HCT116 (cell line): ENCODE measurements at regions of chr22 and their contacts with region 1.

Region 1: GRCh38 chr22:41822317-41823060 is 10.4 kb upstream of the SREBF2 start:
- DNase-seq: peak; percentile 62
- ATAC-seq: peak; percentile 85
- H3K4me3 ChIP-seq: no peak overlapping the region
- H3K27ac ChIP-seq: no peak overlapping the region
- H3K4me1 ChIP-seq: peaks cover 5 to 10% of the 10 kb centered on the region in 2 experiments; a peak in 3 of 4 replicates
- H3K27me3 ChIP-seq: no peaks in the 10 kb centered on the region
- CTCF ChIP-seq: peak; percentile 46 to 68 (median 65); a peak in 5 of 6 replicates
- POLR2A ChIP-seq: no peak
- RAD21 ChIP-seq: peak; percentile 77

Region 2: DNA sequence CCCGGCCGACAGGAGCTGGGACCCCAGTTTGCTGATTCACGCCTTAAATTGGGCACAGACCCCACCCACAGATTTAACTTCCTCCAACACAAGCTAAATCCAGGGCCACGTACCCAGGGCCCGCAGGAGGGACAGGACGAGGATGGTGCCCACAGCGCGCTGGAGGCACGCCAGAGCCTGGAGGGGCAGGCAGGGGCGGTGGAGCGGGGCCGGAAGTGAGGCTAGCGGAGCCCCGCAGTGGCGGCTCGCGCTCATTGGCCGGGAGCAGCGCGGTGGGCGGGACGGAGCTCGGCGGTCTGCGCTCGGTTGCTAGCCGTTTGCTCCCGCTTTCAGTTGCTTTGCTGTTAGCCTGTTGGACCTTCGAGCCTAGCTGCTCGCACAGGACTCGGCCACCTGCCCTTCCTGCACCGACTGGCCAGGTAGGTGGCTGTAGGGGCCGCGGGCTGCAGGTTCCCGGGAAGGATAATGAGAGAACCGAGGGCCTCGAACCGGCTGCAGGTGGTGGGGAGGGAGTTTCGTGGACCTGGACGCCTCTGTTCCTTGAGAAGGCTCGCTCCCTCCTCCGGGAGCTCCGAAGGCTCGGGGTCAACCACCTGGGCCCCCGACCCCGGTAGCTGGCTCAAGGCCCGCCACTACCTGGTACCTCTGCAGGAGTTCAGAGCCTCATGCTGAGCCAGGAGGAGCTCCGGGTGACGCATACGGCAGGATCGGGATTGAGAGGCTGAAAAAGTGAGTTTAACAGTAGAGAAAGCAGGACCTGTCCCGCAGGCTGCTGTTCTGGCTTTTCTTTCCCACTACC is 21.9 kb before region 1 on chr22 and contains the start of gene CCDC134:
- CTCF ChIA-PET with region 1: no interaction called
- POLR2A ChIA-PET with region 1: no interaction called
- RAD21 ChIA-PET with region 1: no interaction called
- intact Hi-C with region 1: no loop called
- DNase-seq: peak; percentile 41
- ATAC-seq: peak; percentile 99
- H3K4me3 ChIP-seq: peak within 1 kb of the TSS; percentile 66 to 93
- H3K27ac ChIP-seq: peak within 1 kb of the TSS; percentile 82
- H3K4me1 ChIP-seq: peaks cover 11 to 20% of the 10 kb centered on the region in 2 experiments
- H3K27me3 ChIP-seq: no peaks in the 10 kb centered on the region
- CTCF ChIP-seq: no peak
- POLR2A ChIP-seq: peak; percentile 93
- RAD21 ChIP-seq: no peak
- total RNA-seq, gene CCDC134: 15.8 TPM

Region 3: DNA sequence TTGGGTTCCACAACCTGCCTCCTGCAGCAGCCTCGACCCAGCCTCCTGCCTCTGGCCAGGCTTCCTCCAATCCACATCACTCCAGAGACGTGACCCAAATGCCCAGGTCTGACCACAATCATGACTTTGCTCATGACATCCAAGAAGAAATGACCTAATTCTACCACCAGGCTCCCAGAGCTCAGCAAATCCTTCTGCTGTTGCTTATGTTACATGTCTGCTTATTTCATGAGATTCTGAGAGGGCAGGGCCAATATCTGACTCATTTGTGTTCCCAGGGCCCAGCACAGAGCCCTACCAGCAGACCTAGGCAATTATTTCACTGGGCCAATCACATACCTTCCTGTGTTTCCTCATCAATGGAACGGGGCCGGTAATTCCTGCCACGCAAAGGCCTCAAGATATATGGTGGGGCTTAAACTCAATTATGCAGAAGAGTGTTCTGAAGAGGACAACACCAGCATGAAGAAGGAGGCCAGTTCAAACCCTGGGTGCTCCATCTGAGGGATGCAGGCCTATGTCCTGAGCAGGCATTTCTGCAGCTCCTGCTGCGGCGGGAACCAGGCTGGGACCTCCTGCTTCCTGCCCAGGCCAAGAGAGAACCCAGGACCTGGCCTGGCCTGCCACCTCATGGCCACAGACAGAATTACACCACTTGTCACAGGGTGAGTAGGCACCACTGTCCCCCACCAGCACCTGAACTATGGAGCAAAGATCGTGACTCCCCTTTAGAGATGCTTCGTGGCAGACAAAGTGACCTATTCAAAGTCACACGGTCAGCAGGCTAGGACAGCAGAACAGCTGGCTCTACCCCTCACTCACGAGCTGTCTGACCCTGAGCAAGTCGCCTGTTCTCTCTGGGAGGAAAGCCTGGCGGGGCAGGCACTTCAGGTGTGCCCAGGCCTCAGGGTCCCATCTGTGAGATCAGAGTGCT is 118.6 kb after region 1 on chr22:
- CTCF ChIA-PET with region 1: no interaction called
- POLR2A ChIA-PET with region 1: no interaction called
- RAD21 ChIA-PET with region 1: no interaction called
- intact Hi-C with region 1: loop called (anchors 1 kb)
- DNase-seq: no peak
- ATAC-seq: peak; percentile 89
- H3K4me3 ChIP-seq: no peak overlapping the region
- H3K27ac ChIP-seq: no peak overlapping the region; the same call in 1 of the 2 replicates
- H3K4me1 ChIP-seq: peaks cover 3 to 21% of the 10 kb centered on the region in 2 experiments; a peak in 3 of 4 replicates
- H3K27me3 ChIP-seq: no peaks in the 10 kb centered on the region
- CTCF ChIP-seq: peak; percentile 81 to 87 (median 83)
- POLR2A ChIP-seq: no peak
- RAD21 ChIP-seq: peak; percentile 91

Region 4: DNA sequence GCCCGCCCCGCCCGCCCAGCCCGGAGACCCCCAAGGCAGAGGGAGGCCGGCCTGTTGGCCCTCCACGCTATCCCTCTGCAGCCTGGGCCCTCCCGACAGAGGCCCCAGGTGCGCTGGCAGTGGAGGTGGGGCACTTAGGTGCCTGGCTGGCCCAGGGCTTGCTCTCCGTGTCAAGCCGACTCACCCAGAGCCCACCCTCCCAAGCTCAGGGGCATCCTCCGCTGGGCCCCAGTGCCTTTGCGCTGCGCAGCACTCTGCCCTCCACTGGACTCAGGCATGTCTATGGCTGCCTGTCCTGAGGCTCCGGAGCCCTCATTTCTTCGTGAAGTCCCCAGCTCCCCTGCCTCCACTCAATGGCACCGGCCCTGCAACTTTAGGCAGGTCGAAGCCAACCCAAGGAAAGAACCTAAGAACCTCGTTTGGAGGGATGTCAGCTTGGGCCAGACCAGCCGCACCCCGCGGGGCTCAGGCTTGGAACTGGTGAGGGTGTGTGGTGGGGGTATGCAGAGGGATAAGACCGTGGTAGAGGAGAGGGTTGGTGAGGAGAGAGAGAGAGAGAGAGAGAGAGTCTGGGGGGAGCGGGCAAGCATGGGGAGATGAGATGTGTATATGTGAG is 135.6 kb after region 1 on chr22:
- CTCF ChIA-PET with region 1: no interaction called
- POLR2A ChIA-PET with region 1: no interaction called
- RAD21 ChIA-PET with region 1: no interaction called
- intact Hi-C with region 1: no loop called
- DNase-seq: no peak
- ATAC-seq: peak; percentile 63
- H3K4me3 ChIP-seq: 0 out of 4 replicates have a peak overlapping the region, but pooled peaks of 1 of the 2 experiments have one; percentile 3
- H3K27ac ChIP-seq: no peak overlapping the region
- H3K4me1 ChIP-seq: peaks cover 0 to 4% of the 10 kb centered on the region in 2 experiments; a peak in 1 of 4 replicates
- H3K27me3 ChIP-seq: no peaks in the 10 kb centered on the region
- CTCF ChIP-seq: no peak
- POLR2A ChIP-seq: no peak
- RAD21 ChIP-seq: no peak